ENCODE measurements at regions of chr1 and their contacts with region 1.

Region 1: GRCh38 chr1:234610348-234611152 is 572 bp upstream of the IRF2BP2 start:
- DNase-seq: peak; percentile 90
- ATAC-seq: peak; percentile 56
- H3K4me3 ChIP-seq: peak overlapping the region; percentile 35 to 71 (median 40)
- H3K27ac ChIP-seq: peak overlapping the region; percentile 99
- H3K4me1 ChIP-seq: peaks cover 47% of the 10 kb centered on the region
- H3K27me3 ChIP-seq: no peaks in the 10 kb centered on the region; a peak in 2 of 5 replicates
- CTCF ChIP-seq: peak; percentile 31
- EP300 ChIP-seq: 0 out of 4 replicates have a peak, but pooled peaks of 1 of the 2 experiments have one; percentile 16
- POLR2A ChIP-seq: peak in 1 of 2 experiments; percentile 82; a peak in 2 of 4 replicates
- RAD21 ChIP-seq: peak; percentile 7; the same call in 1 of the 2 replicates

Region 2: GRCh38 chr1:234553156-234553863 is 57.2 kb before region 1 on chr1:
- CTCF ChIA-PET with region 1: no interaction called
- POLR2A ChIA-PET with region 1: no interaction called
- in situ Hi-C with region 1: no loop called
- intact Hi-C with region 1: no loop called
- DNase-seq: no peak
- ATAC-seq: peak; percentile 45
- H3K4me3 ChIP-seq: no peak overlapping the region
- H3K27ac ChIP-seq: no peak overlapping the region
- H3K4me1 ChIP-seq: peaks cover 47% of the 10 kb centered on the region
- H3K27me3 ChIP-seq: peaks cover 0 to 2% of the 10 kb centered on the region in 2 experiments; a peak in 1 of 5 replicates
- CTCF ChIP-seq: no peak
- EP300 ChIP-seq: no peak
- POLR2A ChIP-seq: no peak
- RAD21 ChIP-seq: no peak

Region 3: DNA sequence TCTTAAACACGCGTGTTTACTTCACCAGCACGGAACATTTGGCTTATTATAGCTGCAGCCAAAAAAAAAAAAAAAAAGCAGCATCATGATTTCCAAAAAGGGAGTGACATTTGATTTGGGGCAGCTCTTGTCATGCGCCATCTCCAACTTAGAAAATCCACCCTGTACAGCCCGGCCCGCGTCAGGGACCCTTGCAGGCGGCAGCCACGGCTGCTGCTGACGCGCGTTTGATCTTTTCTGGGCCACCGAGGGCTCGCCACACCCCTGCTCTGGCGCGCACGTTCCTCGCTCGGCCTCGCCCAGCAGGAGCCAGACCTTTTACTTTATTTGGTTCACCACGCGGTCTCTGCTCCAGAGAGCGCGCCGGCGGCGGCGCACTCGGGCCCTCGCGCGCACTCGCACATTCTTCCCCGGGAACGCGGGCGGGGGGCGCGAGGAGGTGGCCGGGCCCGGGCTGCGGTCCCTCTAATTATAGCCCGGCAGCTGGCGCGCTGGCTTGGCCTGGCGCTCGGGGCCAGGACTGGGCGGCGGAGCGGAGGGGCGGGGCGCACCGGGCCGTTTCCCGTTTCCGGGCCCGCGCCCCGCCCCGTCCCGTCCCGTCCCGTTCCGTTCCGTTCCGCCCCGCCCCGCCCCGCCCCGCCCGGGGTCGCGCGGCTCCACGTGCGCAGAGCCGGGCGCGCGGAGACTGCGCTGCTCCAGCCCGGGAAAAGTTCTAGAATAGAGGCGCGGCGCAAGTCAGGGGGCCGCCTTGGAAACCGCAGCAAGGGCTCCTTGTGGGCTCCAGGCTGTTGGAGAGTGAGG is 10.7 kb before region 1 on chr1:
- CTCF ChIA-PET with region 1: no interaction called
- POLR2A ChIA-PET with region 1: interaction called, 137 read pairs
- in situ Hi-C with region 1: no loop called
- intact Hi-C with region 1: no loop called
- DNase-seq: peak; percentile 85
- ATAC-seq: peak; percentile 85
- H3K4me3 ChIP-seq: peak overlapping the region; percentile 13 to 51 (median 44); a peak in 4 of 6 replicates
- H3K27ac ChIP-seq: peak overlapping the region; percentile 100
- H3K4me1 ChIP-seq: peaks cover 41% of the 10 kb centered on the region
- H3K27me3 ChIP-seq: no peaks in the 10 kb centered on the region; a peak in 1 of 5 replicates
- CTCF ChIP-seq: 0 out of 2 replicates have a peak, but pooled peaks have one; percentile 13
- EP300 ChIP-seq: no peak; a peak in 1 of 4 replicates
- POLR2A ChIP-seq: peak; percentile 26 to 63
- RAD21 ChIP-seq: peak; percentile 81

Region 4: DNA sequence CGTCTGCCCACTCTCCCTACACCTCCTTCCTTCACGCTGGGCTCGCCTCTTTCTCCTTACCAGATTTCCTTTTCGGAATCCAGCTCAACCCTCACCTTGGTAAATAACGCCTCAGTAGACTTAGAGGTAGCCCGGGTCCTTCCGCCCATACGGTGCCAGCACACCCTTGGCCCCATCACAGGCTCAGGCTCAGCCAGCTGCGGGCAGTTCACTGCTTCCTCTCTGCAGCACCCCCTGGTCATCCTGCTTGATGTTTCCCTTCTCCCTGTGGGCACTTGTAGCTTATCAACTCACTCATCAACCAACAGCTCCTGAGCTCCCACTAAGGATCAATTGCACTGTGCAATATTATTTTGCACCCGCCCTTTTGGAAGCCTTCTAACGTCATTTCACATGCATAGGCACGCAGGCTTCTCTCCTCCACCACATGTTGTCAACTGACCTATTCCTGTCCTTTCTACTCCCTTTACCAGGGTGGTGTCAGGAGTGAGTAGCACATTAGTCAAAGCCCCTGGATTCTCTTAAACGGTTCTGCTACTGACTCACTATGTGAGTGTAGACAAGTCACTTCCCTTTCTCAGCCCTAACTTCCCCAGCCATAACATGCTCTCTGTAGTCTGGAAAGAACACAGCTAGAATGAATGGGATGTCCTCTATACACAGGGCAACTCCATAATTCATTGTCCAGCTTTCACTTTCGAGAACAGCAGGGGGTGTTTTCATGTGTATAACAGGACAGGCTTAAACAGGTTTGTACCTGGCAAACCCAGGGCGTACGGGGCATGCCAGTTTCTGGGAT is 46.5 kb after region 1 on chr1:
- CTCF ChIA-PET with region 1: no interaction called
- POLR2A ChIA-PET with region 1: interaction called, 41 read pairs
- in situ Hi-C with region 1: no loop called
- intact Hi-C with region 1: no loop called
- DNase-seq: peak; percentile 38
- ATAC-seq: peak; percentile 53
- H3K4me3 ChIP-seq: no peak overlapping the region
- H3K27ac ChIP-seq: no peak overlapping the region
- H3K4me1 ChIP-seq: peaks cover 65% of the 10 kb centered on the region
- H3K27me3 ChIP-seq: no peaks in the 10 kb centered on the region
- CTCF ChIP-seq: no peak
- EP300 ChIP-seq: no peak
- POLR2A ChIP-seq: no peak
- RAD21 ChIP-seq: no peak

Region 5: GRCh38 chr1:234722904-234723720 is 112.6 kb after region 1 on chr1:
- CTCF ChIA-PET with region 1: no interaction called
- POLR2A ChIA-PET with region 1: interaction called, 1,137 read pairs
- in situ Hi-C with region 1: loop called (anchors 5 kb)
- intact Hi-C with region 1: loop called (anchors 1 kb)
- DNase-seq: peak; percentile 82
- ATAC-seq: no peak
- H3K4me3 ChIP-seq: peak overlapping the region in 1 of 3 experiments; percentile 61; a peak in 2 of 6 replicates
- H3K27ac ChIP-seq: peak overlapping the region; percentile 99
- H3K4me1 ChIP-seq: peaks cover 97% of the 10 kb centered on the region
- H3K27me3 ChIP-seq: no peaks in the 10 kb centered on the region
- CTCF ChIP-seq: no peak
- EP300 ChIP-seq: peak in 1 of 2 experiments; percentile 4; a peak in 1 of 4 replicates
- POLR2A ChIP-seq: peak in 1 of 2 experiments; percentile 48; a peak in 1 of 4 replicates
- RAD21 ChIP-seq: no peak

Region 6: DNA sequence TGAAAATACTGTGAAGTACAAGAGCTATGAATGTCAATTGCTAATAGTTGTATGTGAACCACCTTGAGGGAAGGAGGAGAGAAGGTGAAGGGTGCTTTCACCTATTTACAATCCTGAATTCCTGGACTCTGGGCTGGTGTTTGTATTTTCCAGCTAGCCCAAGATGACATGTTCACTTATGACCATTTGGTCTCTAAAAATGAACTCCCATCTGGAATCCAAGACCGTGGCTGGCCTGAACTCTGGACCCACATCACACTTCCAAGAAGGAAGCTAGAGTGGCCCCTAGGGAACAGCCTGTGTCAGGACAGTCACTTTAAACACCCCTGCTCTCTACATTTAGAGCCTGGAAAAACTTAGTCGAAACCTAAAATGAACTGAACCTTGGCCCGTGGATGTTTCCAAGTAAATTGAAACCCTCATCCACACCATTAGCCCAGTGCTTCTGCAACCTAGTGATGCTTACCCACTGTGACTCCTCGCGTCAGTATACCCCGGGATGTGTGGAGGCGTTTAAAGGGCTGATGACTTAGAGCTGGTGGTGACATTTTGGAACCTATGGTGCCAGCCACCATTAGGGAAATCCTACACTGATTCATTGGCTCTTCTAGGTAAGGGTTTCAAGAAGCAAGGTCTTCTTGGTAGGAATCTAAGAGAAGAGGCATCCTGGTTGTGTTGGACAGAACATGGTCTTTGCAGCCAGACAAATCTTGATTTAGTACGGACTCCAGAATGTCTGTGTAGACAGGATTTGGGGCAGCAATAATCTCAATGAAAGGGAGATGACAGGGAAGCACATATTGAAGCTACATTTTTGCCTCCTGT is 170.9 kb after region 1 on chr1:
- CTCF ChIA-PET with region 1: no interaction called
- POLR2A ChIA-PET with region 1: interaction called, 27 read pairs
- in situ Hi-C with region 1: no loop called
- intact Hi-C with region 1: no loop called
- DNase-seq: peak; percentile 57
- ATAC-seq: peak; percentile 47
- H3K4me3 ChIP-seq: no peak overlapping the region
- H3K27ac ChIP-seq: no peak overlapping the region
- H3K4me1 ChIP-seq: peaks cover 29% of the 10 kb centered on the region
- H3K27me3 ChIP-seq: peaks cover 0 to 27% of the 10 kb centered on the region in 2 experiments; a peak in 3 of 5 replicates
- CTCF ChIP-seq: peak; percentile 52
- EP300 ChIP-seq: peak in 1 of 2 experiments; percentile 25; a peak in 1 of 4 replicates
- POLR2A ChIP-seq: no peak
- RAD21 ChIP-seq: peak; percentile 36; the same call in 1 of the 2 replicates

Region 7: GRCh38 chr1:234918181-234918841 is 307.8 kb after region 1 on chr1:
- CTCF ChIA-PET with region 1: no interaction called
- POLR2A ChIA-PET with region 1: no interaction called
- in situ Hi-C with region 1: no loop called
- intact Hi-C with region 1: no loop called
- DNase-seq: no peak
- ATAC-seq: no peak
- H3K4me3 ChIP-seq: no peak overlapping the region
- H3K27ac ChIP-seq: no peak overlapping the region
- H3K4me1 ChIP-seq: peaks cover 47% of the 10 kb centered on the region
- H3K27me3 ChIP-seq: no peaks in the 10 kb centered on the region
- CTCF ChIP-seq: no peak
- EP300 ChIP-seq: no peak
- POLR2A ChIP-seq: no peak
- RAD21 ChIP-seq: no peak

Region 8: DNA sequence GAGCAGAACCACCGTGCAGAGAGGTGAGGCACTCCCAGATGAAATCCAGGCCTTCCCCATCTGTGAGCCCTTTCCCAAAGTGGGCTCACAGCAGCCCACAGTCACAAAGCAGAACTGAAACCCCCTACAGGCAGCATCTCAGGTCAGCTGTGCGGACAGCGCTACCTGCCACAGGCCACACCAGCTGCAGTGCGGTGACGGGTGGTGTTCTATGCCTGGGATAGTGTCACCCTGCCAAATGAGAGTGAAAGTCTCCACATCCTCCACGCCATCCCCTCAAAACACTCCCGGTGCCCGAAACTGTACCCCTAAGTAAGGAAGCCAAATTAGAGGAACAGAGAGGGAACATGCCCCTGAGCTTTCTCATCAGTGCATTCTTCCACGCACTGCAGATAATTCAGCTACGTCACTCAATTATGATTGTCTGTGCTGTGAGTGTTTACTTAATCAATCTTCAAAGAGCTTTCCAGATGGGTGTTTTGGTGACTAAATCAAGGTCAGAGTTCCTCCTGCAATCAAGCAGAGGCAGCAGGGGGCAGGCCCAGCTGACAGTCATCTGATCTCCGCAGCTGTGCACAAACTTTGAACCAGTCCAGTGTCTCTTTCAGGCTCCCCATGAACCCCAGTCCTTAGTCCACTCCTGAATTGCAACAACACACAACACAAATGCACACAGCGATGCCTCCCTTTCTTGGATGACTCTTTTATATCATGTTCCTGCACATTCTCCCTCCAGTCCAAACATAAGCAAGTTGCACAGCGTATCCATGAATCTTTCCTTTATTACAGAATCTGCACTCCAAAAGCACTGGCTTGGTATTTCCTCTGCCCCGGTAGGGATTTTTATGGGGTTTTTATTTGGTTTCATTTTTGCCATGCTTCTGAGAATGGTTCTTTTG is 368.1 kb after region 1 on chr1:
- CTCF ChIA-PET with region 1: no interaction called
- POLR2A ChIA-PET with region 1: interaction called, 174 read pairs
- in situ Hi-C with region 1: no loop called
- intact Hi-C with region 1: loop called (anchors 2 kb)
- DNase-seq: peak; percentile 96
- ATAC-seq: peak; percentile 12
- H3K4me3 ChIP-seq: no peak overlapping the region
- H3K27ac ChIP-seq: peak overlapping the region; percentile 100
- H3K4me1 ChIP-seq: peaks cover 99% of the 10 kb centered on the region
- H3K27me3 ChIP-seq: no peaks in the 10 kb centered on the region; a peak in 1 of 5 replicates
- CTCF ChIP-seq: peak; percentile 62
- EP300 ChIP-seq: peak; percentile 78 to 96; a peak in 3 of 4 replicates
- POLR2A ChIP-seq: peak in 1 of 2 experiments; percentile 24; a peak in 1 of 4 replicates
- RAD21 ChIP-seq: peak; percentile 56; the same call in 1 of the 2 replicates

Region 9: DNA sequence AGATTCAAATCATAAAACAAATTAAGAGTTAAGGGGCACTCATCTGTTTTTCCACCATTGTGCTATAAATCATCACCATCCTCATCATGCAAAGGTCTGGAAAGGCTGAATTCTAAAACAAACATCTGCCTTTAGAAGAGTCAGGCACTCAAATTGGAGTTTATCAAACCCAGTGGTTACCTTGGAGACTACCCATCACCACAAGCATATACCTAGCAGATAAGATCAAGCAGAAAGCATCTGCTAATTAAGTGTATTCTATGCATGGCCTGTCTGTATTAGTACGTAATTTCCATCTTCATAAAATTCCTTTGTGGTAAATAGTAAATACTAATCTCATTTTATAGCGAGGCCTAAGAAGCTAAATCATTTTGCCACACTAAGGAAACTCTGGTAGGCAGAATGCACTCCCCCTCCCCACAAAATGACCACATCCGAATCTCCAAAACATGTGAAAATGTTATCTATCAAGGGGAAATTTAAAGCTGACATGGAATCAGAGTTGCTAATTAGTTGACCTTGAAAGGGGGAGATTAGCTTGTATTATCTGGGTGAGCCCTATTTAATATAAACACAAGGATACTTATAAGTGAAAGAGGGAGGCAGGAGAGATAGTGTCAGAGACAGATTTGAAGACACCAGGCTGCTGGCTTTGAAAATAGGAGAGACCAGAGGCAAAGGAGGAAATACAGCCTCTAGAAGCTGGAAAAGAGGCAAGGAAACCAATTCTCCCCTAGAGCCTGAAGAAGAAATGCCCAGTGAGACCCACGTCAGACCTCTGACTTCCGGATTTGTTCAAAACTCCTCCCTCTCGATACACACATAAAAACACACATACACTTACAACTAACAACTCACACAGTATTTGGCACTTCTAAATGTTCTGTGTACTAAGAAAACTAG is 694.2 kb after region 1 on chr1:
- CTCF ChIA-PET with region 1: no interaction called
- POLR2A ChIA-PET with region 1: no interaction called
- in situ Hi-C with region 1: no loop called
- intact Hi-C with region 1: no loop called
- DNase-seq: no peak
- ATAC-seq: no peak
- H3K4me3 ChIP-seq: no peak overlapping the region
- H3K27ac ChIP-seq: no peak overlapping the region
- H3K4me1 ChIP-seq: peaks cover 45% of the 10 kb centered on the region
- H3K27me3 ChIP-seq: no peaks in the 10 kb centered on the region
- CTCF ChIP-seq: no peak
- EP300 ChIP-seq: no peak
- POLR2A ChIP-seq: no peak
- RAD21 ChIP-seq: no peak